ENCODE measurements at regions of chr7 and their contacts with region 1.

Region 1: GRCh38 chr7:26151953-26152781 is at the start of gene NFE2L3:
- DNase-seq: peak; percentile 79 to 89
- H3K4me3 ChIP-seq: peak within 1 kb of the TSS; percentile 77
- H3K4me3 Mint-ChIP-seq: peak within 1 kb of the TSS; percentile 91
- H3K27ac Mint-ChIP-seq: peak within 1 kb of the TSS; percentile 92
- H3K4me1 ChIP-seq: peaks cover 43% of the 10 kb centered on the region
- H3K4me1 Mint-ChIP-seq: peaks cover 26% of the 10 kb centered on the region
- H3K27me3 ChIP-seq: no peaks in the 10 kb centered on the region
- H3K27me3 Mint-ChIP-seq: no peaks in the 10 kb centered on the region
- CTCF ChIP-seq: peak in 1 of 2 experiments; percentile 11
- total RNA-seq, gene NFE2L3: 38.4 and 39.2 TPM in 2 replicates

Region 2: DNA sequence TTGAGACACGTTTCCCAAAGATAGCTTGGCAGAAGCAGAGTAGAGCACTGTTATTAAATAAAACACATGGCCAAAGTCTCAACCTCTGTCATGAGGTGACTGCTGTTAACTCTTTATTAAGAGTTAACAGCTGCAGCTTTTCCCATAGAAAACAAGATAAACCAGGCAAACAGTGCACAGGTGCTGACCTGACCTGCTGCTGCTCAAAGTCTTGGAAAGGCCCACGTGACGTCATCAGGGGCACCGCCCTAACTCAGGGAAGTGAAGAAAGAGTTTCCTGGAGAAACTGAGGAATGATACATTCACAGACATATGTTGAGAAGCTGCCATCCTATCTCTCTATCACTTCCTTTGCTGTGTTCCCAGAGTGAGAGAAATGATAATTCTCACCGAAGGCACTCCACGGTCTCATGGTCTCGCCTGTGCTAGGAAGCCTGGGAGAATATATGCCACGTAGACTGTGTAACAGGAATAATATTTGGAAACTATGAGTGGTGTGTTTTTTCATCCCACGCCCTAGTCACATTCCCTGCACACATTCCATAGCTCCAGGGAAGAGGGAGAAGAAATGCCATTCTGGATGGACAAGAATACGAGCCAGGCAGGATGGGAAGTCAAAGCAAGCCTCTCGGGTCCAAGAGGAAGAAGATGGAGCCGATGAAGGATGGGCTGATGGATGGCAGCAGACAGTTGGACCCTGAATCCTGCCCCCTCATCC is 146.3 kb before region 1 on chr7:
- CTCF ChIA-PET with region 1: no interaction called
- POLR2A ChIA-PET with region 1: no interaction called
- intact Hi-C with region 1: loop called (anchors 10 kb)
- DNase-seq: peak; percentile 51 to 75
- H3K4me3 ChIP-seq: no peak overlapping the region
- H3K4me3 Mint-ChIP-seq: peak overlapping the region; percentile 45
- H3K27ac Mint-ChIP-seq: peak overlapping the region; percentile 86
- H3K4me1 ChIP-seq: peaks cover 61% of the 10 kb centered on the region
- H3K4me1 Mint-ChIP-seq: peaks cover 42% of the 10 kb centered on the region
- H3K27me3 ChIP-seq: no peaks in the 10 kb centered on the region
- H3K27me3 Mint-ChIP-seq: no peaks in the 10 kb centered on the region
- CTCF ChIP-seq: no peak

Region 3: DNA sequence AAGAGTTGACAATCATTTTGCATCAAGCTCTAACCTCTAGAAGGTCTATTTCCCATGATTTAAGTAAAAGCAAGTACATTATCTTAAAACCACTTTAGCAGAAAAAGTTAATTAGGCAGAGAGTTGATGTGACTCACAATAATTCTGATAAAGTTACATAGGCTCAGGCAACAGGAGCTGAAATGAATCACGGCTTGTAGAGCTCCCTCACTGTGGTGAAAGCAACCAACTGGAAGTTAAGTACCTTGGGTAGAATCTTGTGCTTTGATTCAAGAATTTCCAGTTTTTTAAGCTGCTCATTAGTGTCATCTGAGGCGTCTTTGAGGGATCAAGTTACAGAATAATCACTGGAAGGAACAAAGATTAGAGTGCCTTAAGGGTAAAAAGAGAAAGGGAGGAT is 69.1 kb before region 1 on chr7:
- CTCF ChIA-PET with region 1: interaction called, 4 read pairs
- POLR2A ChIA-PET with region 1: no interaction called
- intact Hi-C with region 1: loop called (anchors 5 kb)
- DNase-seq: no peak
- H3K4me3 ChIP-seq: no peak overlapping the region
- H3K4me3 Mint-ChIP-seq: no peak overlapping the region
- H3K27ac Mint-ChIP-seq: no peak overlapping the region
- H3K4me1 ChIP-seq: peaks cover 62% of the 10 kb centered on the region
- H3K4me1 Mint-ChIP-seq: peaks cover 50% of the 10 kb centered on the region
- H3K27me3 ChIP-seq: no peaks in the 10 kb centered on the region
- H3K27me3 Mint-ChIP-seq: no peaks in the 10 kb centered on the region
- CTCF ChIP-seq: no peak

Region 4: GRCh38 chr7:26090927-26091519 is 61.1 kb before region 1 on chr7:
- CTCF ChIA-PET with region 1: interaction called, 5 read pairs
- POLR2A ChIA-PET with region 1: no interaction called
- intact Hi-C with region 1: loop called (anchors 5 kb)
- DNase-seq: peak in 1 of 2 experiments; percentile 42
- H3K4me3 ChIP-seq: no peak overlapping the region
- H3K4me3 Mint-ChIP-seq: no peak overlapping the region
- H3K27ac Mint-ChIP-seq: no peak overlapping the region
- H3K4me1 ChIP-seq: peaks cover 24% of the 10 kb centered on the region
- H3K4me1 Mint-ChIP-seq: peaks cover 25% of the 10 kb centered on the region
- H3K27me3 ChIP-seq: no peaks in the 10 kb centered on the region
- H3K27me3 Mint-ChIP-seq: no peaks in the 10 kb centered on the region
- CTCF ChIP-seq: peak; percentile 67

Region 5: DNA sequence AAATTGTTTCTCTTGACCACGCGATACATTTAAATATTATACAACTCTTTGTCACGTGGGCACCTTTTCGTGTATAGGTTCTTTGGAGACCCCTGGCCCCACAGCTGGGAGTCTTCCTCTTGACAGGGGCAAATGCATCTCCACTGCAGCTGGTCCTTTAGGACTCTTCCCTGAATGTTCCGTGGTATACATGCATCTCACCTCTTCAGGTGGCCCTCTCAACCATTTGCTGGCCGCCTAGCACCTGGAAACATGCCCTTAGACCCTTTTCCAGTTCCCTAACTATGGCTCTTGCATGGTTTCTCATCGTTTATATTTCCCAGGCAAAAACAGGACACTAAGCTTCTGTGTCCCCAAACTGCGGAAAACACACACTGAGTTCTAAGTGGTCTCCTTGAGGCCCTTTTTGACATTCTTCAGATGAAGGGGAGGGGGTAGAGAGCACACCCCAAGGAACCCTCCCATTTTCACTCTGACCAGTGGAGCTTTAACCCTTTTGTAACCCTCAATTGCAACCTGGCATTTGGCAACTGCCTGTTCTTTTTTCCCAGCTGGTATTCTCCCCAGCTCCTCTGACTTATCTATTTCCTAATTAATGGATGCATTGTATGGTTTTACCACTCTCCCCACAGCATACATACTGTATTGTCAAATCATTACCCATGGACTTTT is 27.8 kb after region 1 on chr7:
- CTCF ChIA-PET with region 1: interaction called, 3 read pairs
- POLR2A ChIA-PET with region 1: interaction called, 6 read pairs
- intact Hi-C with region 1: loop called (anchors 1 kb)
- DNase-seq: no peak
- H3K4me3 ChIP-seq: no peak overlapping the region
- H3K4me3 Mint-ChIP-seq: no peak overlapping the region
- H3K27ac Mint-ChIP-seq: peak overlapping the region; percentile 64
- H3K4me1 ChIP-seq: peaks cover 17% of the 10 kb centered on the region
- H3K4me1 Mint-ChIP-seq: peaks cover 13% of the 10 kb centered on the region
- H3K27me3 ChIP-seq: no peaks in the 10 kb centered on the region
- H3K27me3 Mint-ChIP-seq: no peaks in the 10 kb centered on the region
- CTCF ChIP-seq: no peak

Region 6: DNA sequence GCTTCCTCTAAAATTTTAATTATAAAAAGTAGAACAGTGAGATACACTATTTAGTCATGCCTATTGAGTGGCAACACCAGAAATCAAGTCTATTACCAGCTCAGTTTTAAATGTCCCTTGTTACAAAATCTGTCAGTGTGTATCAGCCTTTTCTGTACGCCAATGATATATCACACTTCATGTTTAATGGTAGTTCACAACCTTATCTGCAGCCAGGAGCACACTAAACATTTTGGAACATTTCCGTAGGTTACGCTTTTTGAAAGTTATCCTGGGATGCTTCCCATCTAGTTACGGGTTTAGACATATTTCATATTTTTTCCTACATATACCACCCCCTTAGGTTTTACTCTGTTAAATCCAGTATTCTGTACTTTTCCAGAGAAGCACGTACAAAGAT is 43.0 kb after region 1 on chr7:
- CTCF ChIA-PET with region 1: interaction called, 5 read pairs
- POLR2A ChIA-PET with region 1: interaction called, 13 read pairs
- intact Hi-C with region 1: no loop called
- DNase-seq: no peak
- H3K4me3 ChIP-seq: no peak overlapping the region
- H3K4me3 Mint-ChIP-seq: peak overlapping the region; percentile 66
- H3K27ac Mint-ChIP-seq: no peak overlapping the region
- H3K4me1 ChIP-seq: peaks cover 25% of the 10 kb centered on the region
- H3K4me1 Mint-ChIP-seq: peaks cover 39% of the 10 kb centered on the region
- H3K27me3 ChIP-seq: no peaks in the 10 kb centered on the region
- H3K27me3 Mint-ChIP-seq: no peaks in the 10 kb centered on the region
- CTCF ChIP-seq: no peak